ENCODE measurements at regions of chr6 and their contacts with region 1.

Region 1: GRCh38 chr6:170584181-170584953 is at the start of gene PDCD2:
- DNase-seq: peak; percentile 89 to 99 (median 93)

Region 2: GRCh38 chr6:170516783-170517616 is 67.4 kb before region 1 on chr6:
- intact Hi-C with region 1: no loop called
- DNase-seq: peak in 1 of 10 donors; percentile 26

Region 3: GRCh38 chr6:170554013-170554795 is 30.2 kb before region 1 on chr6 and contains the start of gene TBP:
- intact Hi-C with region 1: loop called (anchors 1 kb)
- DNase-seq: peak; percentile 98 to 100 (median 99)